ENCODE measurements at regions of chr16 and their contacts with region 1.

Region 1: GRCh38 chr16:55465077-55465896 is 13.7 kb upstream of the MMP2 start:
- DNase-seq: peak; percentile 86 to 96 (median 94)
- ATAC-seq: peak; percentile 88 to 93
- H3K4me3 ChIP-seq: no peak overlapping the region
- H3K27ac ChIP-seq: no peak overlapping the region
- H3K4me1 ChIP-seq: no peaks in the 10 kb centered on the region
- H3K27me3 ChIP-seq: no peaks in the 10 kb centered on the region

Region 2: GRCh38 chr16:55398762-55399161 is 66.5 kb before region 1 on chr16:
- intact Hi-C with region 1: no loop called
- DNase-seq: no peak
- ATAC-seq: no peak
- H3K4me3 ChIP-seq: no peak overlapping the region
- H3K27ac ChIP-seq: no peak overlapping the region
- H3K4me1 ChIP-seq: no peaks in the 10 kb centered on the region
- H3K27me3 ChIP-seq: peaks cover 3% of the 10 kb centered on the region

Region 3: DNA sequence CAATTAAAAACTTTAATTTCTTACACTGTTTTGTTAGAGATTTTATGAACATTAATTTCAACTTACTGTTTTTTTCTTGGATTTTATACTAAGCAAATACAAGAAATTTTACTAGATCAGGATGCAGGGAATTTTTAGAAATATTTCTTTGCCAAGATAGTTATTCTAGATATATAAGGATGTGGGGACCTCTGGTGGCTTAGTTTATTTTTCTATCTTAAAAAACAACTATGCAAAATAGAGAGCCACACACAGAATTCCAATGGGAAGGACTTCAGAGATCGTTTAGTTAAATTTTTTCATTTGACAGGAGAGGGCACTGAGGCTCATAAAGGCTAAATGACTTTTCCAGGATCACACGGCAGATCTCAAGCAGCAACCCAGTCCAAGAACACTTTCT is 78.2 kb after region 1 on chr16:
- intact Hi-C with region 1: loop called (anchors 2 to 5 kb)
- DNase-seq: no peak
- ATAC-seq: peak in 1 of 2 donors; percentile 40
- H3K4me3 ChIP-seq: no peak overlapping the region
- H3K27ac ChIP-seq: no peak overlapping the region
- H3K4me1 ChIP-seq: no peaks in the 10 kb centered on the region
- H3K27me3 ChIP-seq: no peaks in the 10 kb centered on the region

Region 4: GRCh38 chr16:55562936-55563335 is 97.6 kb after region 1 on chr16:
- intact Hi-C with region 1: loop called in 1 of 4 experiments (anchors 5 kb)
- DNase-seq: no peak
- ATAC-seq: no peak
- H3K4me3 ChIP-seq: no peak overlapping the region
- H3K27ac ChIP-seq: no peak overlapping the region
- H3K4me1 ChIP-seq: peaks cover 2% of the 10 kb centered on the region
- H3K27me3 ChIP-seq: no peaks in the 10 kb centered on the region

Region 5: GRCh38 chr16:55701442-55702319 is 236.4 kb after region 1 on chr16:
- intact Hi-C with region 1: loop called (anchors 2 to 5 kb)
- DNase-seq: peak; percentile 66 to 81 (median 79)
- ATAC-seq: peak; percentile 38 to 68
- H3K4me3 ChIP-seq: no peak overlapping the region
- H3K27ac ChIP-seq: no peak overlapping the region
- H3K4me1 ChIP-seq: no peaks in the 10 kb centered on the region
- H3K27me3 ChIP-seq: no peaks in the 10 kb centered on the region

Region 6: GRCh38 chr16:55842369-55843104 is 377.2 kb after region 1 on chr16:
- intact Hi-C with region 1: loop called in 2 of 4 experiments (anchors 10 kb)
- DNase-seq: no peak
- ATAC-seq: peak; percentile 63 to 71
- H3K4me3 ChIP-seq: no peak overlapping the region
- H3K27ac ChIP-seq: no peak overlapping the region
- H3K4me1 ChIP-seq: no peaks in the 10 kb centered on the region
- H3K27me3 ChIP-seq: no peaks in the 10 kb centered on the region

Measured in right cardiac atrium (tissue), 5 donors.